ENCODE measurements at regions of chr1 and their contacts with region 1.

Region 1: DNA sequence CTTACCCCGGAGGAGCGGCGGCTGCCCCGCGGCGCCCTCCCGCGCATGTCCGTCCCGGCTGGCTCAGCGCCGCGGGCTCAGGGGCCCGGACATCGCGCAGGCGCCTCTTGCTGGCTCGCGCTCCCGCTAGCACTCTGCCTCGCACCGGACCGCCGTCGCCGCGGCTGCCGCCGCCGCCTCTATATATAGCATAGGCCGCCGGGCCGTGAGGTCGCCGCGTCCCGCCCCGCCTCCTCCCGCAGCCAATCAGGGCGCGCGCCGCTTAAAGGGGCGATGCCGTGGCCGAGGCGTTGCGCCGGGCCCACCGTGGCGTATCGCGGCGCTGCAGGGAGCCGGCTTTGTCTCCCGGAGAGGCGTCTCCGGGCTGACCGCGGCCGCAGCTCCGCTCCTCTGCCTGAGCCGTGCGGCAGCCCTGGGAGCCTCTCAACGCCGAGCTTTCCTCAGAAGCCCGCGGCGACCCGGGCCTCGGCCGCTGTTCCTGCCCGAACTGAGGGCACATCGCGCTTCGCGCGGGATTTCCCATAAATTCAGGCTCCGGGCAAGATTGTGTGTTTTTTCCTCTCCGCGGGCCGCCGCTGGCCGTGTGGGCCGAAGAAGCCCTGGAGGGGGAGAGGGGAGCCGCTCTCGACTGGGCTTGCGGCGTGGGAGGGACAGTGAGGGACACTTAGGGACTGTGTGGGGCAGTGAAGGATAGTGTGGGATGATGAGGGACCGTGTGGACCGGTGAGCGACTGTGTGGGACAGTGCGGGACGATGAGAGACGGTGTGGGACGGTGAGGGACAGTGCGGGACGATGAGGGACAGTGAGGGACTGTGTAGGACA is at the start of gene ERRFI1:
- DNase-seq: peak; percentile 93
- ATAC-seq: peak; percentile 81
- H3K4me3 ChIP-seq: peak within 1 kb of the TSS; percentile 66
- H3K27ac ChIP-seq: peak within 1 kb of the TSS; percentile 95
- H3K4me1 ChIP-seq: peaks cover 15% of the 10 kb centered on the region
- H3K27me3 ChIP-seq: no peaks in the 10 kb centered on the region
- CTCF ChIP-seq: no peak
- POLR2A ChIP-seq: peak; percentile 100
- RAD21 ChIP-seq: peak; percentile 20; the same call in 1 of the 2 replicates
- total RNA-seq, gene ERRFI1: 101 and 106 TPM in 2 replicates

Region 2: DNA sequence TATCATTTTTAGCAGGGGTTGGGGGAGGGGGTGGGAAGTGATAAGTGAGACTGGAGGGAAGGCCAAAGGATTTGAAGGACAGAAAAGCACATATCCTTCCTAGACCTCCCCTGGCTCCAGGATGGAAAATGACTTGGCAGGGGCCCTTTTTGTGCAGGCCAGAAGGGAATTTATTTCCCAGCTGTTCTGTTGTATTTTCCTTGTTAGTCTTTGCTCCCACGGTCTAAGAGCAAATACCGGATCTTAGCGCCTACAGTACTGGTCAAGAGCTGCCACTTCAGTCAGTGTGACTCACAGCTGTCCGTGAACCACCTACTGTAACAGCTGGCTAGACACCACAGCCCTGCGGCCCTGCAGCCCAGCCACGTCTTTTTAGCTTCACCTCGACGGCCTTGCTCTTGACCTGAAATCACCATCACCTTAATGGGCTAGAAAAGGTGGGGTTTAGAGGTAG is 50.8 kb after region 1 on chr1:
- CTCF ChIA-PET with region 1: interaction called, 9 read pairs
- POLR2A ChIA-PET with region 1: interaction called, 18 read pairs
- dilution Hi-C with region 1: no loop called
- in situ Hi-C with region 1: no loop called
- intact Hi-C with region 1: no loop called
- DNase-seq: peak; percentile 97
- ATAC-seq: peak; percentile 90
- H3K4me3 ChIP-seq: no peak overlapping the region
- H3K27ac ChIP-seq: peak overlapping the region; percentile 2; the same call in 1 of the 2 replicates
- H3K4me1 ChIP-seq: peaks cover 26% of the 10 kb centered on the region
- H3K27me3 ChIP-seq: no peaks in the 10 kb centered on the region
- CTCF ChIP-seq: no peak
- POLR2A ChIP-seq: peak; percentile 42; the same call in 1 of the 2 replicates
- RAD21 ChIP-seq: 0 out of 2 replicates have a peak, but pooled peaks have one; percentile 26

Region 3: DNA sequence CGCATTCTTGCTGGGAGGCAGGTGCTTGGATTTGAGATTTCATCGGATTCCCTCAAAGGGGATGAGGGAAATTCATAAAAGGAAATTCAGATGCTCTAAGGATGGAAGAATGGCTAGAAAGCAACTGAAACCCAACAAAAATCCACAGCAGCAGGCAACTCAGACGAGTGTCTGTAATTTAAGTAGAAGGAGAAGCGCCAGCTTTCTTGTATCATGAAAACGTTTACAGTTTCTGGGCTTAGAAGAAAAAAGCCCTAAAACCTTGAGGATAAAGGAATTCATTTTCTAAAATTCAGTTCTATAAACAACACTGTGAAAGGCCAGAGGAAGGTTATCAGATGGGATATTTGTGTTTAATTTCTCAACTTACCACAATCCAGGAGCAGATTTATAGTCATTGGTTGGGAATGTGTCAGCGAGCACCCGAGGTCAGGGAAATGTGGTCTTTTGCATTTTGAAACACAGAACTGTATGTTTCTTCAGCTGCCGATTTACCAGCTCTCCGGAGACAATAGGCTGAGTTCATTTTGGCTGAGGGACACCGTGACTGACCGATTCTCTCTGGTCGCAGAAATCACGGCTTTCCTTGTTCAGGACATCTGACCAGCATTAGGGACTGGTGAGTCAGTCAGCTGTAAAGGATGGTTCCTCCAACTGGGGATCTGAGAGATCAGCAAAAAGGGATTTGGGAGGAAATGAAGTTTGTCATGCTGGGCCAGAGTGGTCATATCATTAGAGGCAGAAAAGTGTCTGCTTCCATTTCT is 111.3 kb after region 1 on chr1:
- CTCF ChIA-PET with region 1: no interaction called
- POLR2A ChIA-PET with region 1: no interaction called
- dilution Hi-C with region 1: no loop called
- in situ Hi-C with region 1: no loop called
- intact Hi-C with region 1: loop called (anchors 1 kb)
- DNase-seq: peak; percentile 97
- ATAC-seq: peak; percentile 75
- H3K4me3 ChIP-seq: no peak overlapping the region; the same call in 1 of the 2 replicates
- H3K27ac ChIP-seq: peak overlapping the region; percentile 96
- H3K4me1 ChIP-seq: peaks cover 23% of the 10 kb centered on the region
- H3K27me3 ChIP-seq: no peaks in the 10 kb centered on the region; the same call in 1 of the 2 replicates
- CTCF ChIP-seq: no peak
- POLR2A ChIP-seq: no peak
- RAD21 ChIP-seq: peak; percentile 21; the same call in 1 of the 2 replicates

Region 4: DNA sequence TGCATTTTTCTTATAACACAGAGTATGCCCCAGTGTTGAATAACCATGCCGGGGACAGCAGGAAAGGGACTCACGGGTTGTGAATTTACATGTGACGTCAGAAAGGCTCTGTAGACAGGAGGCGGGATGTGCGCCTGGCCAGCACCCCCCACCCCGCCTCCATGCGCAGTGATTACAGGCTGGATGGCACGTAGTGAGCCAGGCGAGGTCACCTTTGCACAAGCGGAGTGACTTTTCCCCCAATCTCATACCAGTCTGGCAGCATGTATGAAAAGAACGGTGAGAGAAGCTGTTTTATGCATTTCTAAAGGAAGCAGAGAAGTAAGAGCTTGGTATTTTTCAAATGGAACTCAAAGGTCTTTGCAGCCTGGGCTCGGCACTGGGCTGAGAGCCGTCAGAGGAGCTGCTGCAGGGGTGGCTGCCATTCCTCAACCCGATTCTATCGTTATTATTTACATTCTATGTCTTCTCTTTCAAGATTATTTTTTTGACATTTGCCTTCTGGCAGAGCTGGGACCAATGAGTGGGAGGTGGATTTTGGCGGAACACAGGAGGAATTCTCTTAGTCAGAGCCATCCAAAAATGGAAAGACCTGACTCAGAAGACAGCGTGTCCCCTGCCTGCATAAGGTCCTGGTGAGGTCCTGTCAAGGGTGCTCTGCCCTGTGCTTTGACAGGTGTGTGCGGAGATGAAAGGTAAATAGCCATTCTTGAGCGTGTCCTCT is 176.0 kb after region 1 on chr1:
- CTCF ChIA-PET with region 1: no interaction called
- POLR2A ChIA-PET with region 1: no interaction called
- dilution Hi-C with region 1: no loop called
- in situ Hi-C with region 1: no loop called
- intact Hi-C with region 1: loop called (anchors 5 kb)
- DNase-seq: peak; percentile 97
- ATAC-seq: peak; percentile 77
- H3K4me3 ChIP-seq: peak overlapping the region; percentile 1; the same call in 1 of the 2 replicates
- H3K27ac ChIP-seq: peak overlapping the region; percentile 97
- H3K4me1 ChIP-seq: peaks cover 38% of the 10 kb centered on the region
- H3K27me3 ChIP-seq: no peaks in the 10 kb centered on the region
- CTCF ChIP-seq: no peak
- POLR2A ChIP-seq: no peak
- RAD21 ChIP-seq: peak; percentile 39

Region 5: DNA sequence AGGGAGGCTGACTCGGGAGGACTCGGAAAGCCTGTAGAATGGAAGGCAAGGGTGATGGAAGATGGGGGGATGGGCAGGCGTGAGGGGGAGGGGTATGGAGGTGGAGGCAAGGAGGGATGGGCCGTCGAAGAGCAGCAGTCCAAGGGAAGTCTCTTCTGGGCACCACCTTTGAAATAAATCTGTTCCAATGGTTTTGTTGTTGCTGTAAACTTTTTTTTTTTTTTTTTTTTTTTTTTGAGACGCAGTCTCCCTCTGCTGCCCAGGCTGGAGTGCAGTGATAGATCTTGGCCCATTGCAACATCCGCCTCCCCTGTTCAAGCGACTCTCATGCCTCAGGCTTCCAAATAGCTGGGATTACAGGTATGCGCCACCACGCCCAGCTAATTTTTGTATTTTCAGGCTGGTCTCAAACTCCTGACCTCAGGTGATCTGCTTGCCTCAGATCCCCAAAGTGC is 212.5 kb after region 1 on chr1:
- CTCF ChIA-PET with region 1: interaction called, 4 read pairs
- POLR2A ChIA-PET with region 1: no interaction called
- dilution Hi-C with region 1: no loop called
- in situ Hi-C with region 1: no loop called
- intact Hi-C with region 1: loop called (anchors 2 kb)
- DNase-seq: peak; percentile 58
- ATAC-seq: peak; percentile 19
- H3K4me3 ChIP-seq: no peak overlapping the region
- H3K27ac ChIP-seq: peak overlapping the region; percentile 76
- H3K4me1 ChIP-seq: peaks cover 14% of the 10 kb centered on the region
- H3K27me3 ChIP-seq: no peaks in the 10 kb centered on the region
- CTCF ChIP-seq: peak; percentile 46
- POLR2A ChIP-seq: no peak
- RAD21 ChIP-seq: peak; percentile 46

Measured in IMR-90 (cell line).